ENCODE measurements at regions of chr4 and their contacts with region 1.

Region 1: DNA sequence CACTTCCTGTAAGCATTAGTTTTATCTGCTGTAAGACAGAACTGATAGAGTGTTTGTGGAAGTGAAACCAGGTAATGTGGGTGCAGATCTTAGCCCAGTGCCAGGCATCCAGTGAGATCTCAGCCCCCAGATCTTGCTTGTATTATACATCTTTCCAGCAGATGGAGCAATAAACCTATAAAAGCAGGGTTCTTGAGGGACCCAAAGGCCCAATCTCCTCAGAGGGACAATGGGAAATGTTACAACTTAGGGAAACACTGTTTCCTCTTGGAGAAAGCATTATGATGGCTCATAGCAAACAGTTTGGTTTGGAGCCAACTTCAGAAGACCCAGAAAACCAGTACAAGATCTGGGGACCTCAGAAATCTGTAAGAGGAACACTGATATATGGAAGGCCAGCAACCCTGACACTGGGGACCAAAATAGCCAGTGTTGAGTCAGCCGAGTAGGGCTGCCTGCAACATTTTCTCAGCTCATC is 206.3 kb downstream of the SLC7A11 start:
- DNase-seq: peak in 1 of 2 donors; percentile 11
- ATAC-seq: peak; percentile 77 to 91 (median 84)
- H3K4me3 ChIP-seq: no peak overlapping the region
- H3K27ac ChIP-seq: no peak overlapping the region
- H3K4me1 ChIP-seq: peaks cover 0 to 8% (median 0%) of the 10 kb centered on the region in 9 donors
- H3K27me3 ChIP-seq: no peaks in the 10 kb centered on the region
- CTCF ChIP-seq: peak in 8 of 9 donors; percentile 19 to 76 (median 62)

Region 2: DNA sequence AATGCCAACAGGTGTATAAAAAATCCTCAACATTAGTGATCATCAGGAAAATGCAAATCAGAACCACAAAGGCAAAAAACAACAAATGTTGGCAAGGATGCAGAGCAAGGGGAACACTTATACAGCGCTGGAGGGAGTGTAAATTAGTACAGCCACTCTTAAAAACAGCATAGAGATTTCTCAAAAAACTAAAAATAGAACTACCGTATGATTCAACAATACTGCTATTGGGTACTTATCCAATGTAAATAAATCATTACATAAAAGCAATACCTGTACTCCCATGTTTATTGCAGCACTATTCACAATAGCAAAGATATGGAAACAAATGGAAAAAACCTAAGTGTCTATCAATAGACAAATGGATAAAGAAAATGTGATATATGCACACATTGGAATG is 35.0 kb after region 1 on chr4:
- intact Hi-C with region 1: no loop called
- DNase-seq: no peak
- ATAC-seq: no peak
- H3K4me3 ChIP-seq: no peak overlapping the region
- H3K27ac ChIP-seq: no peak overlapping the region
- H3K4me1 ChIP-seq: no peaks in the 10 kb centered on the region
- H3K27me3 ChIP-seq: no peaks in the 10 kb centered on the region
- CTCF ChIP-seq: no peak

Region 3: GRCh38 chr4:138090150-138090917 is 54.5 kb after region 1 on chr4:
- intact Hi-C with region 1: loop called in 5 of 10 experiments (anchors 2 to 5 kb)
- DNase-seq: peak; percentile 14 to 61
- ATAC-seq: peak; percentile 65 to 85 (median 80)
- H3K4me3 ChIP-seq: peak overlapping the region in 4 of 10 donors; percentile 24 to 26 (median 25)
- H3K27ac ChIP-seq: no peak overlapping the region
- H3K4me1 ChIP-seq: peaks cover 0 to 8% (median 0%) of the 10 kb centered on the region in 9 donors
- H3K27me3 ChIP-seq: no peaks in the 10 kb centered on the region
- CTCF ChIP-seq: peak; percentile 73 to 85 (median 85)

Region 4: GRCh38 chr4:138182838-138183426 is 147.1 kb after region 1 on chr4:
- intact Hi-C with region 1: loop called in 9 of 10 experiments (anchors 1 to 5 kb)
- DNase-seq: peak in 1 of 2 donors; percentile 23
- ATAC-seq: peak in 5 of 8 donors; percentile 49 to 78 (median 64)
- H3K4me3 ChIP-seq: no peak overlapping the region
- H3K27ac ChIP-seq: no peak overlapping the region
- H3K4me1 ChIP-seq: peaks cover 0 to 21% (median 15%) of the 10 kb centered on the region in 9 donors
- H3K27me3 ChIP-seq: no peaks in the 10 kb centered on the region
- CTCF ChIP-seq: peak; percentile 24 to 78 (median 68)

Region 5: GRCh38 chr4:138669479-138670315 is 633.9 kb after region 1 on chr4:
- intact Hi-C with region 1: loop called in 1 of 10 experiments (anchors 10 kb)
- DNase-seq: no peak
- ATAC-seq: no peak
- H3K4me3 ChIP-seq: no peak overlapping the region
- H3K27ac ChIP-seq: no peak overlapping the region
- H3K4me1 ChIP-seq: peaks cover 0 to 29% (median 7%) of the 10 kb centered on the region in 9 donors
- H3K27me3 ChIP-seq: no peaks in the 10 kb centered on the region
- CTCF ChIP-seq: no peak

Region 6: DNA sequence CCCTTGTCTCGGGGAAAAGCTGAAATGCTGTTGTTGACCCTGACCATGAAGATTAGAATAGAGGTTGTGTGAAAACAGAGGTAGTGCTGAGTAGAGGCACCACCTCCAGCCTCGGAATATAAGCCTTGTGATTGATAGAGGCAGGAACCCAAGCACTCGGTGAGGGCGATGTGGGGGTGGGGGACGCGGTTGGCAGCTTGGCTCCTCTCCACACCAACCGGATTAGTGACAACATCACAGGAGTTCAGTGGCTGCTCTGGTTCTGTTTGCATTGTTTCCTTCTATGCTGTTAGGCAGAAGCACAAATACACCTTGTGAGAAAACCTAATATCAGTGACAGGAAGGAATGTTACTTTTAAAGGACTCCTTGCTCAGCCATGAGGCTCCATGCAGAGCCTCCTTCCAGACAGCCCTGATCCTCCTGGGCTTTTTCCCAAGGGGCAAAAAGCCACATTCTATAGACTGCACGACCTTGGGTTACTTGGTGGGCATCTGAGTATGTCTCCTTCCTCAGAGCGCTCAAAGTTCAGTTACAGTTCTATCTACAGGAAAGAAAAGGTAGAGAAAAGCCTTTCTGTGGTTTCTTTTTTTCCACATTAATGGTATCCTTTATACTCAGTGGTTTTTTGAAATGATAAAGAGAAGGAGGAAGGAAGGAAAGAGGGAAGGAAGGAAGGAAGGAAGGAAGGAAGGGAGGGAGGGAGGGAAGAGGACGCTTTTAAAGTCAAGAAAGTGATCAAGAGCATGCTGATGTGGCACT is 829.3 kb after region 1 on chr4:
- intact Hi-C with region 1: loop called in 8 of 10 experiments (anchors 2 to 10 kb)
- DNase-seq: no peak
- ATAC-seq: no peak
- H3K4me3 ChIP-seq: no peak overlapping the region
- H3K27ac ChIP-seq: no peak overlapping the region
- H3K4me1 ChIP-seq: no peaks in the 10 kb centered on the region
- H3K27me3 ChIP-seq: peaks cover 0 to 13% (median 4%) of the 10 kb centered on the region in 7 donors
- CTCF ChIP-seq: no peak

Region 7: GRCh38 chr4:138919094-138919936 is 883.5 kb after region 1 on chr4:
- intact Hi-C with region 1: loop called in 1 of 10 experiments (anchors 10 kb)
- DNase-seq: peak; percentile 60 to 76
- ATAC-seq: peak; percentile 42 to 95 (median 82)
- H3K4me3 ChIP-seq: peak overlapping the region in 2 of 10 donors; percentile 11 to 17
- H3K27ac ChIP-seq: no peak overlapping the region
- H3K4me1 ChIP-seq: peaks cover 0 to 11% (median 0%) of the 10 kb centered on the region in 9 donors
- H3K27me3 ChIP-seq: no peaks in the 10 kb centered on the region
- CTCF ChIP-seq: peak; percentile 52 to 85 (median 78)

Measured in heart right ventricle (tissue), 16 donors.